Pancreas (tissue), 10 donors: ENCODE measurements at regions of chr15 and their contacts with region 1.

Region 1: DNA sequence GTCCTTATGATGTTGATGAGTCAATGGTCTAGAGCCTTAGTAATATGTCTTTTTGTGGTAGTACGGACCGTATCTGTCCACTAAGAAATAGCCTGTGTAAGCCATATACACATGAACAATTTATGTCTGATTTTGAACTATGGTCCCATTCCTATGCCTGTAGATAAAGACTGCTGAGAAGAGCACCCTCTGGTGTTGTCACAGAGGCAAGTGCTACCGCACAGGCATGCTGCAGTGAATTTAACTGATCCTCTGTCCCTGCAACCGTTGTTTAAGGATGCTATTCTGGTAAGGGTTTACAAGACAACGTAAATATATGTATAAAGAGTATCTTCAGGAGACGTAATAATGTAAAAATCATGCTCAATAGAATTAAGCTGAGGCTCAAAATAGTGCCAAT is 170.7 kb downstream of the UBE3A start:
- DNase-seq: no peak
- ATAC-seq: no peak
- H3K4me3 ChIP-seq: no peak overlapping the region
- H3K27ac ChIP-seq: no peak overlapping the region
- H3K4me1 ChIP-seq: no peaks in the 10 kb centered on the region
- H3K27me3 ChIP-seq: no peaks in the 10 kb centered on the region
- CTCF ChIP-seq: no peak

Region 2: DNA sequence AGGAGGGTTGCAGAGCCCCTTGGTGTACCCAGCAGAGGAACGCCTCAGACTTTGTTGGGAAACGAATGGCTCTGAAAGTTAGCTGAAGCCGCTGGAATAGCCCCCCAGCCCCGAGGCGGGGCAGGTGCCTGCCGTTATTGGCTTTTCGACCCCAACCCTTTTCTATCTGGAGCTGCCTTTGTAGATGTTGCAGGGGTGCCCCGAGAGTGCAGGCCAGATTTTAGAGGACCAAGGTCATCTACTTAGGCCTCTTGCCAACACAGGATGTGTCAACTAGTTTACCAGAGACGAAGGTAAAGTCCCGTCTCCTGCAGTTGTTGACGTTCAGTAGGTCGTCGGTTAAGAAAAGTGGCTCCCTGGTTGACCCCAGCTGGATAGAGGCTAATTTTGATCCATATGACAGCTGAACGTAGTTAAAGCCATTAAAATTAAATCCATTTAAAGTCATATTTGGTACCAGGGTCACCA is 171.2 kb after region 1 on chr15:
- intact Hi-C with region 1: no loop called
- DNase-seq: peak in 3 of 6 donors; percentile 48 to 62 (median 54)
- ATAC-seq: peak; percentile 23 to 46 (median 37)
- H3K4me3 ChIP-seq: peak overlapping the region; percentile 96 to 100 (median 98)
- H3K27ac ChIP-seq: peak overlapping the region; percentile 84 to 97 (median 95)
- H3K4me1 ChIP-seq: peaks cover 0 to 17% (median 11%) of the 10 kb centered on the region in 3 donors
- H3K27me3 ChIP-seq: no peaks in the 10 kb centered on the region
- CTCF ChIP-seq: no peak

Region 3: DNA sequence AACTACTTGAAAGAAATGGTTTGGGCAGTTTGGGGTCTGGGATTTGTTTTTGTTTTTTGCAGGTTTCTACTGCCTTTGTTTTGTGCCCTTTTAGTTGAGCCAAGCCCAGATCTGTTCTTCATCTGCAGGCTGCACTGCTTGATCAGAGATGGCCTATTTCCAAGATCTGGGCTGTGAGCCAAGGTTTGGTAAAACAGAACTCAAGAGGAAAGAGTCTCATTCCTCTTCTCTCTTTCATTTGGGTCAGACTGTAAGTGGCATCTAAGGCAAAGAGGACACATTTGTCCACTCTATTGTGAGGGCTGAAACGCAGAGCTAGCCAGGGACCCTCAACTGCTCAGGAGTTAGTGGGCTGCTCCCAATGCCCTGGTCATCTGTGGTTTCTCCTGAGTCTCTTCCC is 275.0 kb after region 1 on chr15:
- intact Hi-C with region 1: loop called in 1 of 3 experiments (anchors 10 kb)
- DNase-seq: peak in 3 of 6 donors; percentile 7 to 28 (median 28)
- ATAC-seq: peak in 2 of 4 donors; percentile 47 to 58
- H3K4me3 ChIP-seq: no peak overlapping the region
- H3K27ac ChIP-seq: no peak overlapping the region
- H3K4me1 ChIP-seq: no peaks in the 10 kb centered on the region
- H3K27me3 ChIP-seq: no peaks in the 10 kb centered on the region
- CTCF ChIP-seq: no peak